ENCODE measurements at regions of chr5 and their contacts with region 1.

Region 1: GRCh38 chr5:132639706-132640130 is 18.3 kb upstream of the IL13 start:
- DNase-seq: peak; percentile 85
- ATAC-seq: peak; percentile 67
- H3K4me3 Mint-ChIP-seq: no peak overlapping the region
- H3K27ac Mint-ChIP-seq: peak overlapping the region; percentile 93
- H3K4me1 Mint-ChIP-seq: peaks cover 83% of the 10 kb centered on the region
- H3K27me3 Mint-ChIP-seq: no peaks in the 10 kb centered on the region
- CTCF ChIP-seq: no peak

Region 2: GRCh38 chr5:132662925-132663770 is 23.4 kb after region 1 on chr5:
- CTCF ChIA-PET with region 1: interaction called, 10 read pairs
- POLR2A ChIA-PET with region 1: interaction called, 102 read pairs
- intact Hi-C with region 1: no loop called
- DNase-seq: peak; percentile 75
- ATAC-seq: peak; percentile 76
- H3K4me3 Mint-ChIP-seq: peak overlapping the region; percentile 11
- H3K27ac Mint-ChIP-seq: peak overlapping the region; percentile 83
- H3K4me1 Mint-ChIP-seq: peaks cover 52% of the 10 kb centered on the region
- H3K27me3 Mint-ChIP-seq: peaks cover 3% of the 10 kb centered on the region
- CTCF ChIP-seq: no peak

Region 3: GRCh38 chr5:132688536-132689339 is 49.0 kb after region 1 on chr5:
- CTCF ChIA-PET with region 1: interaction called, 3 read pairs
- POLR2A ChIA-PET with region 1: interaction called, 5 read pairs
- intact Hi-C with region 1: loop called (anchors 5 kb)
- DNase-seq: peak; percentile 55
- ATAC-seq: peak; percentile 49
- H3K4me3 Mint-ChIP-seq: no peak overlapping the region
- H3K27ac Mint-ChIP-seq: peak overlapping the region; percentile 62
- H3K4me1 Mint-ChIP-seq: peaks cover 40% of the 10 kb centered on the region
- H3K27me3 Mint-ChIP-seq: no peaks in the 10 kb centered on the region
- CTCF ChIP-seq: no peak

Region 4: DNA sequence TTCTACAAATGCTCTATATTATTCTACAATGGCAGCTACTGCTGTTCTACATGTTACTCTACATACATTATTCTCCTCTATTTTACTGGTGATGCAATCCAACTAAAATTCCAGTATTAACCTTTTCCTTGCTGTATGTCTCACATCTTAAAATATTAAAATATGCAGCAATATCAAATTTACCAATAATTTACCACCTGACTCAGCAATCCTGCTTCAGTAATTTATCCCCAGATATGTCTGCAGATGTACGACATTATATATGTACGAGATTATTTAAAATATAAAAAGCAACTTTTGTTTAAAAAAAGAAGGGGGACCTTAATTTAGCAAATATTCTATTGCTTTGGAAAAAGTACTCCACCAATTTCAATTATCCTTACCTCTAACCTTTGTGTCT is 86.0 kb after region 1 on chr5:
- CTCF ChIA-PET with region 1: no interaction called
- POLR2A ChIA-PET with region 1: no interaction called
- intact Hi-C with region 1: no loop called
- DNase-seq: no peak
- ATAC-seq: no peak
- H3K4me3 Mint-ChIP-seq: no peak overlapping the region
- H3K27ac Mint-ChIP-seq: no peak overlapping the region
- H3K4me1 Mint-ChIP-seq: peaks cover 5% of the 10 kb centered on the region
- H3K27me3 Mint-ChIP-seq: no peaks in the 10 kb centered on the region
- CTCF ChIP-seq: no peak

Measured in activated CD8-positive, alpha-beta T cell treated with anti-CD3 and anti-CD28 coated beads for 36 hours (primary cell).